ENCODE measurements at regions of chr7 and their contacts with region 1.

Region 1: DNA sequence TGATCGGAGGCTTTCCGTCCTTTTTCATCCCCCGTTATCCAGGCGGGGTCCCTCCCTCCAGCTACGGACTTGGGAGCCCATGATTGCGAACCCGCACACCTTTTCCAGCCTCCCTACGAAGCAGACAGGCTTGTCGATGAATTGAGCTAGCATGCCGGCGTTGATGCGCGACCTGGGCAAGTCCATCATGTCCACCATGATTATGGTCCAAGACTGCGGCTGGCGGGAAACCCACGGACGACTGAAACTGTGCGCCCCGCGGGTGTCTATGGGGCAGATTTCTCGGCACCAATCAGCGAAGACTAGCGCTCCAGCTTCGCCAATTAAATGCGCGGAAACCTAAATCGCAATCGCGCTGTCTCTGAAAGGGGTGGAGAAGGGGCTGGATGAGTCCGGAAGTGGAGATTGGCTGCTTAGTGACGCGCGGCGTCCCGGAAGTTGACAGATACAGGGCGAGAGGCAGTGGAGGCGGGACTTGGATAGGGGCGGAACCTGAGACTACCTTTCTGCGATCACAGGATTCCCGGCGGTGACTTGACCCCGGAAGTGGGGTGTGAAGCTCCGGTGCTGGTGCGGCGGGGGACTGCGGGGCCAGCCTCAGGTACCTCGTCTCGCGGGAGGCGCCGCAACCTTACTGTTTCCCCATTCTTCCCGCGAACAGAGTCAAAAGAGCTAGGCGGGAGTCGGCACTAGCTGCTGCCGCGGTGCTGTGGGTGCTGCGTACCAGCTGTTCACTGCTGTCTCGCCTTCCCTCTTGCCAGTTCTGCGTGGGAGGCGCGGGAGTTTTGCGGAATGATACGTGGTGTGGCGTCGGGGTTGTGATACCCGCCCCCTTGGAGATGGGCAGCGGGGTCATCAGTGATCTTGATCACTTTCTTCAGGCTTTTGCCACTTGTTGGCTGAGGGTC is at the start of gene UMAD1:
- DNase-seq: peak; percentile 93 to 99
- H3K4me3 ChIP-seq: peak within 1 kb of the TSS; percentile 61 to 96 (median 91)
- H3K27ac ChIP-seq: peak within 1 kb of the TSS; percentile 91
- H3K4me1 ChIP-seq: peaks cover 0 to 5% (median 3%) of the 10 kb centered on the region in 4 experiments; a peak in 3 of 7 replicates
- H3K27me3 ChIP-seq: no peaks in the 10 kb centered on the region
- CTCF ChIP-seq: no peak
- EP300 ChIP-seq: no peak
- POLR2A ChIP-seq: peak; percentile 66 to 92
- RAD21 ChIP-seq: 0 out of 4 replicates have a peak, but pooled peaks of 1 of the 2 experiments have one; percentile 1
- total RNA-seq, gene UMAD1: 10.4 and 10.8 TPM in 2 replicates

Region 2: GRCh38 chr7:7653593-7654187 is 13.2 kb after region 1 on chr7:
- CTCF ChIA-PET with region 1: interaction called, 12 read pairs
- POLR2A ChIA-PET with region 1: interaction called, 4 read pairs
- DNase-seq: peak in 1 of 2 experiments; percentile 85
- H3K4me3 ChIP-seq: no peak overlapping the region
- H3K27ac ChIP-seq: no peak overlapping the region
- H3K4me1 ChIP-seq: 0 out of 7 replicates have a peak, but pooled peaks cover 0 to 3% (median 0%) of the 10 kb centered on the region in 4 experiments
- H3K27me3 ChIP-seq: no peaks in the 10 kb centered on the region
- CTCF ChIP-seq: peak in 2 of 3 experiments; percentile 62 to 80; a peak in 3 of 4 replicates
- EP300 ChIP-seq: no peak
- POLR2A ChIP-seq: no peak
- RAD21 ChIP-seq: peak; percentile 60 to 69

Measured in H1 (cell line).